ENCODE measurements at regions of chr1 and their contacts with region 1.

Region 1: DNA sequence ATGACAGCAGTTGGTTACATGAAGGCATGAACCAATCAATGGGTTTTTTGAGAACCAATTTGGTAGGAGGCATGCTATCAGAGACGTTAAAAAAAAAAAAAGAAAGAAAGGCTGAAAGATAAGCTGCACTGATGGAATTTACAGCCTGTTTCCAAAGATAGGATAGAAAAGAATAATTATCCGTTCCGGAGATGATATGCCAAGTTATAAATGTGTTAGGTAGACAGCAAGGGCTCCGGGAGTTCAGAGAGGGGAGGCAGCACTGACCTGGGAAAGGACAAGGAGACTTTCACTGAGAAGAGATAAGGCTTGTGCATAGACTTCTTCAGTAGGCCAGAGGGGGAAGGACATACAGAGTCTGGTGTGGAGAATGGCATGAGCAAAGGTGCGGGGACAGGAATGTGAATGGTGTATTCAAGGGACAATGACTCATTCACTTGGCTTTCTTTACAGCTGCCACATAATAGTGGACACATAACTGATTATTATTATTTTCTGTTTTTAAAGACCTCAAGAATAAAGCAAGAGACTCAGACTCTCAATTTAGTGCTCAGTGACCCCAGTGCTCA is 24.8 kb upstream of the ACBD6 start:
- DNase-seq: no peak
- ATAC-seq: peak; percentile 16
- H3K4me3 ChIP-seq: no peak overlapping the region
- H3K27ac ChIP-seq: no peak overlapping the region
- H3K4me1 ChIP-seq: peaks cover 15% of the 10 kb centered on the region
- H3K27me3 ChIP-seq: no peaks in the 10 kb centered on the region
- CTCF ChIP-seq: no peak
- POLR2A ChIP-seq: no peak

Region 2: DNA sequence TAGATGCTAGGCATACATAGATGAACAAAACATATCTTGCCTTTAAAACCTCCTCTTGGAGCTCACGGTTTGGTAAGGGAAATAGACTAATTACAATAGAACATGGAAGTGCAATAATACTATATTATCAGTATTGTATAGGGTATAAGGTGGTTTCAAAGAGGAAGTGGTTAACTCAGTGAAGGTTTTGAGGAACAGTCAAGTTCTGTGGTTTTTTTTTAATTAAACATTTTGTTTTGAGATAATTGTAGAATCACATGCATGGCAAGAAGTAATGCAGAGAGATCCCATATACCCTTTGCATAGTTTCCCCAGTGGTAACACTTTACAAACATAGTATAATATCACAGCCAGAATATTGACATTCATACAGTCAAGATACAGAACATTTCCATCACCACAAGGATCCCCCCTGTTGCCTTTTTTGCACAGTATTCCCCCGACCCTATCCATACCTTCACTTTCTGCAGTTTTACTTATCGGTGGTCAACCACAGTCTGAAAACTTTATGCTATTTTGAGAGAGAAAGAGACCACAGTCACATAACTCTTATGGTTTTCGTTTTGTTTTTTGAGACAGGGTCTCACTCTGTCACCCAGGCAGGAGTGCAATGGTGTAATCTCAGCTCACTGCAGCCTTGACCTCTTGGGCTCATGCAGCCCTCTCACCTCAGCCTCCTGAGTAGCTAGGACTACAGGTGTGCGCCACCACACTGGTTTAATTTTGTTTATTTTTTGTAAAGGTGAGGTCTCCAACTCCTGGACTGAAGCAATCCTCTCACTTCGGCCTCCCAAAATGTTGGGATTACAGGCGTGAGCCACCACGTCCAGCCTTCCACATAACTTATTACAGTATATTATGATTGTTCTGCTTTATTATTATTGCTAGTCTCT is 325.1 kb after region 1 on chr1:
- intact Hi-C with region 1: loop called (anchors 10 kb)
- DNase-seq: no peak
- ATAC-seq: no peak
- H3K4me3 ChIP-seq: no peak overlapping the region
- H3K27ac ChIP-seq: no peak overlapping the region
- H3K4me1 ChIP-seq: peaks cover 54% of the 10 kb centered on the region
- H3K27me3 ChIP-seq: no peaks in the 10 kb centered on the region
- CTCF ChIP-seq: no peak
- POLR2A ChIP-seq: no peak

Region 3: DNA sequence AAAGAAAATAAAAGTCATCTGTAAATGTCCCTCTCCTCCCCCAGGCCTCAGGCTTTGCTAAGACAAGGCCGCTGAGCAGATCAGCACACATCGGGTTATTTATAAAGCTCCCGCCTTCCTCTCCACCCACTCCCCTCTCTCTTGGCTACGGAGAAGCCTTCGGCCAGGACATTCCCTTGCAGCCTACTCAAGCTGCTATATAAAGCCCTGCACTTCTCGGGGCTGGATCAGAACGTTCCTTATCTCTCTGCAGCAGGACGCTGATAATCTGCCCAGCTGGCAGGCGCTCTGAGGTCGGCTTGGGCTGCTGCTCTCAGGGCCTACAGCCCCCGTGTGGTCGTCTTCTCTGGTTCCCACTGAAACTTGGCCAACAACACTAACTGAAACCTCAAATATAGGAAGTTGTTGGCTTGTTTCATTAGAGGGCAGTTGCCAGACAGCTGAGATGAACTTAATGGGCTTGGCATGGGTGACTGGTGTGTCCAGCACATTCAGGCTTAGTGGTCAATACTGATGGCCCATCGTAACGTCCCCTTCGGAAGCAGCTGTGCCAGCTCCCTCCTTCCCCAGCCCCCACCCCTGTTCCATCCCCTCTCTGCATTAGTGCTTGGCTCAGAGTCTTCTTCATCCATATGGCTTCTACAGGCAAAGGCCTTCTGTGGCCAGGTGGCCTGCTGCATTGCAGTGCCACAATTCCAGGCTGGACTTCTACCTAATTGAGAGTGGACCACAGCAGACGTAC is 625.9 kb after region 1 on chr1:
- intact Hi-C with region 1: loop called (anchors 10 kb)
- DNase-seq: peak; percentile 81 to 90 (median 89)
- ATAC-seq: peak; percentile 94
- H3K4me3 ChIP-seq: no peak overlapping the region
- H3K27ac ChIP-seq: peak overlapping the region; percentile 68 to 73 (median 70)
- H3K4me1 ChIP-seq: peaks cover 25% of the 10 kb centered on the region
- H3K27me3 ChIP-seq: no peaks in the 10 kb centered on the region
- CTCF ChIP-seq: peak in 4 of 7 experiments; percentile 39 to 53 (median 46)
- POLR2A ChIP-seq: peak in 2 of 3 donors; percentile 47 to 56

Measured in body of pancreas (tissue), 4 donors.